ENCODE measurements at regions of chr7 and their contacts with region 1.

Region 1: DNA sequence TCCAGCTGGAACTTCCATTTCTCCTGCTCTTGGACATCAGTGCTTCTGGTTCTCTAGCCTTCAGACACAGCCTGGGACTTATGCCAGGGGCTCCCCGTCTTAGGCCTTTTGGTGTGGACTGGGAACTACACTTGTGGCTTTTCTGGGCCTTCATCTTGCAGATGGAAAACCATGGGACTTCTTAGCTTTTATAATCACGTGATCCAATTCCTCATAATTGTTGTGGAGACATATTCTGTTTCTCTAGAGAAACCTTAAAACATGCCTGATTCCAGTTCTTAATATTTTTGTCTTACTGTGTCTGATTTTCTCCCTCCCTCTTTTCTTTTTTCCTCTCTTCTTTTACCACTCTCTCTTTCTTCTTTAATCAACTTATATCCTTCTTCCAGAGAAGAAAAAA is 224.2 kb upstream of the FOXP2 start:
- H3K4me3 Mint-ChIP-seq: no peak overlapping the region
- H3K27ac Mint-ChIP-seq: no peak overlapping the region
- H3K4me1 Mint-ChIP-seq: no peaks in the 10 kb centered on the region
- H3K27me3 Mint-ChIP-seq: peaks cover 1% of the 10 kb centered on the region

Region 2: GRCh38 chr7:114243019-114243507 is 52.7 kb after region 1 on chr7:
- intact Hi-C with region 1: no loop called
- H3K4me3 Mint-ChIP-seq: no peak overlapping the region
- H3K27ac Mint-ChIP-seq: no peak overlapping the region
- H3K4me1 Mint-ChIP-seq: no peaks in the 10 kb centered on the region
- H3K27me3 Mint-ChIP-seq: no peaks in the 10 kb centered on the region

Region 3: GRCh38 chr7:114364151-114364550 is 173.8 kb after region 1 on chr7:
- intact Hi-C with region 1: loop called (anchors 10 kb)
- H3K4me3 Mint-ChIP-seq: no peak overlapping the region
- H3K27ac Mint-ChIP-seq: no peak overlapping the region
- H3K4me1 Mint-ChIP-seq: no peaks in the 10 kb centered on the region
- H3K27me3 Mint-ChIP-seq: no peaks in the 10 kb centered on the region

Measured in dendritic cell treated with granulocyte-macrophage colony-stimulating factor and Interleukin-4, amounts not matched to agents 40 ng/mL and 50 ng/mL, for 4 days (primary cell).